HCT116 (cell line): ENCODE measurements at regions of chr2 and their contacts with region 1.

Region 1: GRCh38 chr2:137947728-137948336 is 16.4 kb upstream of the HNMT start:
- DNase-seq: peak; percentile 59
- ATAC-seq: peak; percentile 88
- H3K4me3 ChIP-seq: no peak overlapping the region
- H3K27ac ChIP-seq: no peak overlapping the region
- H3K4me1 ChIP-seq: peaks cover 0 to 3% of the 10 kb centered on the region in 2 experiments; a peak in 1 of 4 replicates
- H3K27me3 ChIP-seq: no peaks in the 10 kb centered on the region
- CTCF ChIP-seq: peak; percentile 68 to 82 (median 79); a peak in 5 of 6 replicates
- POLR2A ChIP-seq: no peak
- RAD21 ChIP-seq: peak; percentile 83

Region 2: DNA sequence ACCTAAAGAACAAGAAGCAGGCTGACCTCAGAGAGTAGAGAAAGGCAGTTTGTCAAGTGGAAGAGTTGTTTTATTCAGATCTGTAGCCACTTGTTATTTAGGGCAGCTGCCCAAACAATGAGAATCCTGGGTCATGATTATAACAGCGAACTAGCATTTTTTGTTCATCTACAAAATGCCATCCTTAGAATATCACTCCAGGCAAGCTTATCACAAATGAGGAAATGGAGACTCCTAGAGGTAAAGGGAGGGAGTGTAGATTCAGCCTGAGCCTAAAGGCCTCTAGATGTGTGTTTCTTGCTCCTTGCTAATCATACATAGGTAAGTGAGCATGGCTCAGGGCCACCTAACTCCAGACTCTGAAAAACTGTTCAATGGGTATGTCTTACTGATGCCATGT is 142.5 kb after region 1 on chr2:
- CTCF ChIA-PET with region 1: interaction called, 9 read pairs
- POLR2A ChIA-PET with region 1: no interaction called
- RAD21 ChIA-PET with region 1: no interaction called
- intact Hi-C with region 1: loop called (anchors 1 kb)
- DNase-seq: peak; percentile 22
- ATAC-seq: peak; percentile 92
- H3K4me3 ChIP-seq: no peak overlapping the region
- H3K27ac ChIP-seq: no peak overlapping the region
- H3K4me1 ChIP-seq: no peaks in the 10 kb centered on the region
- H3K27me3 ChIP-seq: no peaks in the 10 kb centered on the region
- CTCF ChIP-seq: peak; percentile 54 to 64 (median 61); a peak in 4 of 6 replicates
- POLR2A ChIP-seq: no peak
- RAD21 ChIP-seq: peak; percentile 76

Region 3: DNA sequence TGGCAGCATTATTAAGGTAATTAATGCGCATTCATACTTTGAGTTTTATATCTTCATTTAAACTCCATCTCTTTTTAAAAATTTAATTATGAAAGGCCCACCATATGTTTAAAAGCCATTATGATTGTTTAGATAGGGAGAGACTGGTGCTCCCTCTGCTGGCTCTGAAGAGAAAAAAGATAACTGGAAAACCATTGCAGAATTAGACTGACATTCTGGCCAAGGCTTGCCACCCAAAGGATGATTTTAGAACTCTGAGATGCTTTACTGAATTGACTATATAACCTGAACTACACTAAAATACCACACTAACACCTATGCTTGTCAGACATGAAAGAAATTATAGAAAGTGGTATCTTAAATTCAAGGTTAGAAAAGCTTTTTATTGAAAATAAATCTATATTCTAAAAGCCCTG is 426.2 kb after region 1 on chr2:
- CTCF ChIA-PET with region 1: no interaction called
- POLR2A ChIA-PET with region 1: no interaction called
- RAD21 ChIA-PET with region 1: no interaction called
- intact Hi-C with region 1: loop called (anchors 2 kb)
- DNase-seq: peak; percentile 27
- ATAC-seq: peak; percentile 57; the same call in 1 of the 2 replicates
- H3K4me3 ChIP-seq: no peak overlapping the region
- H3K27ac ChIP-seq: no peak overlapping the region
- H3K4me1 ChIP-seq: no peaks in the 10 kb centered on the region
- H3K27me3 ChIP-seq: no peaks in the 10 kb centered on the region
- CTCF ChIP-seq: peak; percentile 63 to 84 (median 78)
- POLR2A ChIP-seq: no peak
- RAD21 ChIP-seq: peak; percentile 78